ENCODE measurements at regions of chr15 and their contacts with region 1.

Region 1: DNA sequence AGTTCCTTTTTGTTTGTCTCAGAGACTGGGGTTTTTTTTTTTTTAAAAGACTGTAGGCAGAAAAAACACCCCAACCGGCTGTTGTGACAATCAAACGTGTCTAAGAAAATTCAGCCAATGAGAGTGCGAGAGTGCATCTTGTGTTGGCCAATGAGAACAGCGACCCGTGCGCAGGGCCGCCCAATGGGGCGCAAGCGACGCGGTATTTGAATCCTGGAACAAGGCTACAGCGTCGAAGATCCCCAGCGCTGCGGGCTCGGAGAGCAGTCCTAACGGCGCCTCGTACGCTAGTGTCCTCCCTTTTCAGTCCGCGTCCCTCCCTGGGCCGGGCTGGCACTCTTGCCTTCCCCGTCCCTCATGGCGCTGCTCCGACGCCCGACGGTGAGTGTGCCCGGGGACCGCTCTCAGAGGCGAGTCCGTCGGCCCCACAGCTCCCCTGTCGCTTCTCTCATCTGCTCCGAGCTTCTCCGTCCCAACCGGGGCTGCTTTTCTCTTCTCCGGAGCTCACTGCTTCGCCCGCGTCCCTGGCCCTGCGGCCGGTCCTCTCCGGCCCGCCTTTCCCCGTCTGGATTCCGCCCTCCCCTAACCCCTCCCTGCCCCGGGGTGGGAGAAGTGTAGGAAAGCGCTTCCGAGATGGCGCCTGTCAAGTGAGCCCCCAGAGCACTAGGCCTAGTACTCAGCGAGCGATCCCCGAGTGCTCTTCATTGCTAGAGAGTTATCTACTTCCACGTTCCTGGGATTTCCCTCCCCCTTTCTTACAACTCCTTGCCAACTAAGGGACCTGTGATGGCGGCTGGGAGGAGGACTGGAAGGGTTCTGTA is at the start of gene CCNB2:
- H3K4me3 Mint-ChIP-seq: peak within 1 kb of the TSS; percentile 84
- H3K27ac Mint-ChIP-seq: peak within 1 kb of the TSS; percentile 97
- H3K4me1 Mint-ChIP-seq: peaks cover 24% of the 10 kb centered on the region
- H3K27me3 Mint-ChIP-seq: no peaks in the 10 kb centered on the region

Region 2: DNA sequence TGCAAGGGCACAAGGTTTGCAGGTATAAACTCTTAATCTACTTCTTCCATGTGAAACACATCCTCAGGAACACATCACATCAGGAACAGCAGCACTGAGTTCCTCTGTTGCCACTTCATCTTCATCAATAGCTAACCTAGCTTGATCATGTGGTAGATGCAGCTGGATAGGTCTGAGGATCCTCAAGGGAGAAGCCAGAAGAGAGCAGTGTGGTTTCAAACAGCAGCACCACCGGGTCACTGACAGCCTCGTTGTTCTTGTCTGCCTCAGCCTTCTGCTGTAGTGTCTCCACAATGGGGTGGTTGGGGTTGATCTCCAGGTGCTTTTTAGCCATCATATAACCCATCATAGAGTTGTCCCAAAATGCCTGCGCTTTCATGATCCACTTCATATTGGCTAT is 414.4 kb before region 1 on chr15:
- intact Hi-C with region 1: no loop called
- H3K4me3 Mint-ChIP-seq: no peak overlapping the region
- H3K27ac Mint-ChIP-seq: no peak overlapping the region
- H3K4me1 Mint-ChIP-seq: peaks cover 32% of the 10 kb centered on the region
- H3K27me3 Mint-ChIP-seq: no peaks in the 10 kb centered on the region

Region 3: DNA sequence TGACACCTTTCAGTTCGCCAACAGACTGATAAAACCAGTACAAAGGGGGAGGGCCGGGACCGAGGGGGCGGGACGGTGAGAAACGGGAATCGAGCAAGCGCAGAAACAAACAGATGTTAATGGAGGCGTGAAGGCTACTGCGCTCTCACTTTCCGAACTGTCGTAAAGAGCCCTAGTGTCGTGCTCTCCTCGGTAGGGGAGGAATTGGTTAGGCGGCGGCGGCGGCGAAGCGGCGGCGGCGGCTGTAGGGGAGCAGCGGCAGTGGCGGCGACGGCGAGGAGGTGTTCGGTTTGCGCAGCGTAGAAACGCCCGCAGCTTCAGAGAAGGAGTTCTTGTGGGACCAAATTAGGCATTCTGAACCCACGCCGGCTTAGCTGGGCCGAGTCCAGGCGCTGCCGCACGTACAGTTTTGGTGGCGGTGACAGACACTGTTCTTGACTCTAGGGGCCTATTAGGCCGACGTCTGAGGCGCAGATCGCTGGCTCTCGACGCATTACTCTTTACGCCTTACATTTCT is 117.6 kb before region 1 on chr15 and contains the start of gene RNF111:
- intact Hi-C with region 1: loop called (anchors 10 kb)
- H3K4me3 Mint-ChIP-seq: peak within 1 kb of the TSS; percentile 95
- H3K27ac Mint-ChIP-seq: peak within 1 kb of the TSS; percentile 98
- H3K4me1 Mint-ChIP-seq: peaks cover 48% of the 10 kb centered on the region
- H3K27me3 Mint-ChIP-seq: no peaks in the 10 kb centered on the region

Region 4: DNA sequence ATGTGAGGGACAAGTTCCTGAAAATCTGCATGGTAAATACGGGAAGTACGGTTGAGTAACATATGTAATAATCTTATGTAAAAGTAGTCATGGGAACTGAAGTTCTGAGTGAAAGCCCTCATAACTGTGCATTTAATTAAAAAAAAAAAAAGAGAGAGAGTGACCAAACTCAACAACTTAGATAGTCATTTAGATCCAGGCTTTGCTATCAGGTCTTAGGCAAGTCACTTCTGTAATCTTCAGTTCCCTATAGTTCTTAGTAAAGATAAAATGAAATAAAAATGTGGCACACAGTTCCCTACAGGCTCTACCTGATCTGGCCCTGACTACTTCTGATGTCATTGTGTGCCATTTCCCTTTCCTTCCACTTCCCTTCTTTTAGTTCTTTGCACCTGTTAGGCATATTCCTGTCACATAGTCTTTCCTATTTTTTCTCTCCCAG is 102.7 kb before region 1 on chr15:
- intact Hi-C with region 1: no loop called
- H3K4me3 Mint-ChIP-seq: no peak overlapping the region
- H3K27ac Mint-ChIP-seq: peak overlapping the region; percentile 58
- H3K4me1 Mint-ChIP-seq: peaks cover 65% of the 10 kb centered on the region
- H3K27me3 Mint-ChIP-seq: no peaks in the 10 kb centered on the region

Region 5: DNA sequence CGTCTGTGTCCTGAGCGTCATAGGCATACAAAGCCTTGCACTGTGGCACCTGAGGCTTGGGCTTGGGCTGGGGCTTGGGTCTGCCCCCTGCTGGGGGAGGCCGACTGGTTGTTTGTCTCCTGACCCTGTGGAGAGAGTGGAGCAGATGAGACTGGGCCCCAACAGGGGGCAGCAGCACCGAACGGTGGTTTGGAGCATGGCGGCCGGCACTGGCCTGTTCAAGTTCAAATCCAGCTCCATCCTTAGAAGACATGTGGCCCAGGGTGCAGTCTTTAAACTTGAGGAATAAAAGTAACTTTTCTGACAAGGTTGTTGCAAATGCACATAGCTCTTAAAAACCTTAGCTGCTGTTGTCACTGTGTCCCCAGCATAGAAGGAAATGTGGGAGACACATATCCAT is 33.1 kb after region 1 on chr15:
- intact Hi-C with region 1: no loop called
- H3K4me3 Mint-ChIP-seq: no peak overlapping the region
- H3K27ac Mint-ChIP-seq: peak overlapping the region; percentile 20
- H3K4me1 Mint-ChIP-seq: peaks cover 40% of the 10 kb centered on the region
- H3K27me3 Mint-ChIP-seq: no peaks in the 10 kb centered on the region

Measured in dendritic cell treated with granulocyte-macrophage colony-stimulating factor and Interleukin-4, amounts not matched to agents 40 ng/mL and 50 ng/mL, for 4 days (primary cell).